Mammary epithelial cell (primary cell): ENCODE measurements at regions of chr2 and their contacts with region 1.

Region 1: DNA sequence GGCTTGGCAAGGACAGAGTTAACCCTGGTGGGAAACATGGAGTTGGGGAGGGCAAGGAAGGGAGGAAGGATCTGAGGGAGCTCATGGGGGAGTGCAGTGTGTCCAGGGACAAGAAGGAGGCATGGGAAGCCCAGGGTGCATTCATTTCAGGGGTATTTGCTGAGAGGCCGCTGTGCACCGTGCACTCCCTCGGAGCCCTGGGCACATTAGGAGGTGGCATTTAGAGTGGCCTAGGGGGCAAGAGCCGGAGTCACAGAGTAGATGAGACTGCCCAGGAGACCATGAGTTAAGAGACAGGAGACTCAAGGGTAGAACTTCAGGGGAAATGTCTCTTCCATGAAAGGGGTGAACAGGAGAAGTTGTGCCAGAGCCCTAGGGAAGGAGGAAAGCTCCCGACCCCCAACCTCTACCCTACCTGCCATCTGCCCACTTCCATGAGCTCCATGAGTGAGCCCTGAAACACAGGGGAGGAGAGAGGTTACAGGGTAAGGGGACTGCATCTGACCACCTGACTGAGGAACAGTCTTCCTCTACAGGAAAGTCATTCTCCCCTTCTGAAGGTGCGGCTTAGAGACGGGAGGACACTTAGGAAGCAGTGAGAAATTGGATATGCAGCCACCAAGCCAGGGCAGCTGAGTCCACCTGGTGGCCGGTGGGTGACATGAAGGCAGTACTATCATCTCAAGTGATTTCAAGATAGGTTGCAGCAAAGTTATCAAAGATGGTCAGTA is 58.5 kb upstream of the COPS8 start:
- DNase-seq: peak; percentile 57
- H3K4me3 ChIP-seq: no peak overlapping the region
- H3K27ac ChIP-seq: no peak overlapping the region
- H3K4me1 ChIP-seq: peaks cover 10% of the 10 kb centered on the region
- H3K27me3 ChIP-seq: no peaks in the 10 kb centered on the region
- CTCF ChIP-seq: peak; percentile 93 to 96

Region 2: DNA sequence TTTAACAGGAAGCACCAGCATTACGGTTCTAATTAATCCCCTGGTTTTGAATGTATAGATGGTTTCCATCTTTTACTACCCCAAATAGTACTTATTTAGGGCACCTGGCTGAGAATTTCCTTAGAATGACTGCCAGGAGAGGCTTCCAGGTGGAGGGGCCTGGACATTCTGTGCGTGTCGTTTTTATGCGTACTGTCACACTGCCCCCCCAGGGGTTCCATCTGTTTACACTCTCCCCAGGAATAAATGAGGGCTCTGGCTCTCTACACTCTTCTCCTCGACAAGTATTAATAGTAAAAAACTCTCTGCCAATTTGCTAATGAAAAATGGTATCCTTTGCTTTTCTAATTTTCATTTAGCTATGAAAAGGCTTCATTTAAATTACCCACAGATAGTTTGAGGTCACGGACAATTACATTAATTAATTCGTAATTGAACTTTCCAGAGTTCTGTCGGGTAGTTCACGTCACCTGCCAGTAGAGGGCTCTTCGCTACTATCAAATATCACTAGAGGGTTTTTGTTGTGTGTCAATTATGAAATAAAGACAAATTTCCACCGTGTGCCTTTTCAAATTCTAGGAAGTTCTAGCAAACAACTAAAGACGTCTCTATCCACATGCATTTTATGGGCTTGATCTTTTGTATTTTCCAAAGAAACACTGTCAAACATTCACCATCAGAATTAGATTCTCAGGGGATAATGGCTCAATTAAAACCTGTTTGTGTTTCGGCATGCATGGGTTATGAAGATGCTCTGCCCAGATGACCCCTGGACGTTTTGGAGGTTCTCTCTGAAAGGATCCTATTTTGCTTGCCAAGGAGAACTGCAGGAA is 674.2 kb before region 1 on chr2:
- CTCF ChIA-PET with region 1: no interaction called
- dilution Hi-C with region 1: no loop called
- in situ Hi-C with region 1: no loop called
- intact Hi-C with region 1: loop called (anchors 1 kb)
- DNase-seq: peak; percentile 9
- H3K4me3 ChIP-seq: no peak overlapping the region
- H3K27ac ChIP-seq: no peak overlapping the region
- H3K4me1 ChIP-seq: no peaks in the 10 kb centered on the region
- H3K27me3 ChIP-seq: no peaks in the 10 kb centered on the region
- CTCF ChIP-seq: peak; percentile 71 to 78

Region 3: DNA sequence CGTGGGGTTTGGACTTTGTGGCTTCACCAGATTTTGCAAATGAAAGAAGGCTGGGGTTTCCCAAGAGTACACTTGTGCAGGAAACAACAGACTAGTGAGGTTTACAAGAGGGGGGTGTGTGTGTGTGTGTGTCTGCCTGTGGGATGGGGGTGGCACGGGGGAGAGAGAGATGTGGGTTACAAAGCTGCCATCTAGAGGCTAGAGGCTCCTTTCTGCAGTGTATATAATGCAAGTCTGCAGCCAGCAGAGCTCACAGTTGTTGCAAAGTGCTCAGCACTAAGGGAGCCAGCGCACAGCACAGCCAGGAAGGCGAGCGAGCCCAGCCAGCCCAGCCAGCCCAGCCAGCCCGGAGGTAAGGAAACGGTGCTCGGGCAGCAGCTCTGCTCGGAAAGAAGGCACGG is 457.6 kb before region 1 on chr2 and contains the start of gene ACKR3:
- CTCF ChIA-PET with region 1: no interaction called
- dilution Hi-C with region 1: no loop called
- in situ Hi-C with region 1: no loop called
- intact Hi-C with region 1: loop called (anchors 1 kb)
- DNase-seq: peak; percentile 75
- H3K4me3 ChIP-seq: peak within 1 kb of the TSS; percentile 25 to 44 (median 34)
- H3K27ac ChIP-seq: no peak within 1 kb of the TSS
- H3K4me1 ChIP-seq: no peaks in the 10 kb centered on the region
- H3K27me3 ChIP-seq: no peaks in the 10 kb centered on the region
- CTCF ChIP-seq: peak; percentile 44 to 62
- total RNA-seq, gene ACKR3: 1.8 to 79.0 TPM

Region 4: DNA sequence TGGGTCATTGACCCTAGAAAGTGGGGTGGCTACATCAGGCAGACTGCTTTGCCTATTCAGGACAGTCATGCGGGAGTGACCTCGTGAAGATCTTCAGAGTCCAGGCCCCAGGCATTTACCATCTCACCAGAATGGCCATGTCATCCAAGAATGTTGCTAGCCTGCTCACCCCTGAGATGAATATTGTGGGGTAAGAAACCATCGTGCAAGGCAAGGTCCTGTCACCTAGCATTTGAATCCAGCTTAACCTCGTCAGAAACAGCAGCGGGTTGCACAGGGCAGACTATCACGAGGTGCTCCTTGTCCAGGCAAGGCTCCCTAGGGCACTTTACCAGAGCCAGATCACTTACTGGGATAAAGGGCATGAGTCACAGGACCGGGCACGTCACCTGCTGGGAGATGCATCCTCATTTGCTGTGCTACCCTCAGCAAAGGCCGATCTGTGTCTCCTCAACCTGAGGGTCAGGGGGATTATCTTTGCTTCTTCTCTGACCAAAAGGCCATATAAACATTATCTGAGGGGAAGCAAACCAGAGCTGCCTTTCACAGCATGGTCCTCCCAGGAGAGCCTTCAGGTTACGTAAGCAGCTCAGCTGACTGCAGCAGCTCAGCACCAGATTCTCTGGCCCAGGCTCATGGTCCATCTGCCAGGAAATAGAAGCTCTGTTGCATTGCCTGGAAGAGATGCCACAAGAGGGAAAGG is 295.1 kb before region 1 on chr2:
- CTCF ChIA-PET with region 1: no interaction called
- dilution Hi-C with region 1: no loop called
- in situ Hi-C with region 1: no loop called
- intact Hi-C with region 1: loop called (anchors 5 kb)
- DNase-seq: peak; percentile 48
- H3K4me3 ChIP-seq: no peak overlapping the region
- H3K27ac ChIP-seq: no peak overlapping the region
- H3K4me1 ChIP-seq: peaks cover 10% of the 10 kb centered on the region
- H3K27me3 ChIP-seq: no peaks in the 10 kb centered on the region
- CTCF ChIP-seq: no peak

Region 5: GRCh38 chr2:236769921-236770671 is 257.1 kb before region 1 on chr2:
- CTCF ChIA-PET with region 1: interaction called, 3 read pairs
- dilution Hi-C with region 1: no loop called
- in situ Hi-C with region 1: no loop called
- intact Hi-C with region 1: loop called (anchors 2 kb)
- DNase-seq: peak; percentile 99
- H3K4me3 ChIP-seq: no peak overlapping the region
- H3K27ac ChIP-seq: peak overlapping the region; percentile 78
- H3K4me1 ChIP-seq: peaks cover 34% of the 10 kb centered on the region
- H3K27me3 ChIP-seq: no peaks in the 10 kb centered on the region
- CTCF ChIP-seq: no peak